HCT116 (cell line): ENCODE measurements at regions of chr21 and their contacts with region 1.

Region 1: GRCh38 chr21:39715804-39716397 is 29.1 kb upstream of the IGSF5 start:
- DNase-seq: peak; percentile 28
- ATAC-seq: peak; percentile 79
- H3K4me3 ChIP-seq: no peak overlapping the region
- H3K27ac ChIP-seq: no peak overlapping the region
- H3K4me1 ChIP-seq: no peaks in the 10 kb centered on the region
- H3K27me3 ChIP-seq: no peaks in the 10 kb centered on the region; the same call in 1 of the 2 replicates
- CTCF ChIP-seq: peak; percentile 48 to 67 (median 52); a peak in 5 of 6 replicates
- POLR2A ChIP-seq: no peak
- RAD21 ChIP-seq: peak; percentile 63

Region 2: GRCh38 chr21:39511131-39511530 is 204.8 kb before region 1 on chr21:
- CTCF ChIA-PET with region 1: no interaction called
- POLR2A ChIA-PET with region 1: no interaction called
- RAD21 ChIA-PET with region 1: no interaction called
- intact Hi-C with region 1: no loop called
- DNase-seq: no peak
- ATAC-seq: no peak
- H3K4me3 ChIP-seq: no peak overlapping the region
- H3K27ac ChIP-seq: no peak overlapping the region
- H3K4me1 ChIP-seq: no peaks in the 10 kb centered on the region
- H3K27me3 ChIP-seq: no peaks in the 10 kb centered on the region
- CTCF ChIP-seq: no peak
- POLR2A ChIP-seq: no peak
- RAD21 ChIP-seq: no peak

Region 3: GRCh38 chr21:39686646-39687468 is 29.0 kb before region 1 on chr21:
- CTCF ChIA-PET with region 1: no interaction called
- POLR2A ChIA-PET with region 1: no interaction called
- RAD21 ChIA-PET with region 1: no interaction called
- intact Hi-C with region 1: no loop called
- DNase-seq: no peak
- ATAC-seq: no peak
- H3K4me3 ChIP-seq: no peak overlapping the region
- H3K27ac ChIP-seq: no peak overlapping the region
- H3K4me1 ChIP-seq: no peaks in the 10 kb centered on the region
- H3K27me3 ChIP-seq: no peaks in the 10 kb centered on the region
- CTCF ChIP-seq: no peak
- POLR2A ChIP-seq: no peak
- RAD21 ChIP-seq: no peak

Region 4: DNA sequence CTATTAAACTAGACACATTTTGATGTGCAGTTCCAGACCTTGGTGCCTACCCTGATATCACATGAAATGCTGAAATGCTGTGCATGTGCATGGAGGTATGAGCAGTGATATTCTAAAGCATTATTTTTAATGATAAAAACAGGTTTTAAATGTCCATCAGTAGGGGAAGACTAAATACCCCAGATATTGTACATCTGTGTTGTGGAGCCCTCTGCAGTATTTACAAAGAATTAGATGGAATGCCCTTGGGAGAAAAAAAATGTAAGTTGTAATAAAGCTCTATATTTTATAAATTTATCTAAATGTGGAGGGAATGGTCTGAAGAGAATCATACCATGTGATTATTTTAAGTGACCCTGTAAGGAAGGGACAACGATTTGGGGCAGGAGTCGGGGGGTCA is 10.1 kb before region 1 on chr21:
- CTCF ChIA-PET with region 1: interaction called, 10 read pairs
- POLR2A ChIA-PET with region 1: no interaction called
- RAD21 ChIA-PET with region 1: interaction called, 4 to 9 read pairs
- intact Hi-C with region 1: no loop called
- DNase-seq: no peak
- ATAC-seq: no peak
- H3K4me3 ChIP-seq: no peak overlapping the region
- H3K27ac ChIP-seq: no peak overlapping the region
- H3K4me1 ChIP-seq: no peaks in the 10 kb centered on the region
- H3K27me3 ChIP-seq: no peaks in the 10 kb centered on the region
- CTCF ChIP-seq: peak in 1 of 3 experiments; percentile 42; a peak in 2 of 6 replicates
- POLR2A ChIP-seq: no peak
- RAD21 ChIP-seq: peak; percentile 54